H1 (cell line): ENCODE measurements at regions of chr12 and their contacts with region 1.

Region 1: GRCh38 chr12:26845057-26845666 is 12.2 kb upstream of the ITPR2 start:
- DNase-seq: peak in 1 of 2 experiments; percentile 76
- H3K4me3 ChIP-seq: no peak overlapping the region
- H3K27ac ChIP-seq: no peak overlapping the region
- H3K4me1 ChIP-seq: no peaks in the 10 kb centered on the region
- H3K27me3 ChIP-seq: no peaks in the 10 kb centered on the region
- CTCF ChIP-seq: peak; percentile 48 to 66 (median 58)
- EP300 ChIP-seq: no peak
- POLR2A ChIP-seq: no peak
- RAD21 ChIP-seq: peak; percentile 37 to 60

Region 2: DNA sequence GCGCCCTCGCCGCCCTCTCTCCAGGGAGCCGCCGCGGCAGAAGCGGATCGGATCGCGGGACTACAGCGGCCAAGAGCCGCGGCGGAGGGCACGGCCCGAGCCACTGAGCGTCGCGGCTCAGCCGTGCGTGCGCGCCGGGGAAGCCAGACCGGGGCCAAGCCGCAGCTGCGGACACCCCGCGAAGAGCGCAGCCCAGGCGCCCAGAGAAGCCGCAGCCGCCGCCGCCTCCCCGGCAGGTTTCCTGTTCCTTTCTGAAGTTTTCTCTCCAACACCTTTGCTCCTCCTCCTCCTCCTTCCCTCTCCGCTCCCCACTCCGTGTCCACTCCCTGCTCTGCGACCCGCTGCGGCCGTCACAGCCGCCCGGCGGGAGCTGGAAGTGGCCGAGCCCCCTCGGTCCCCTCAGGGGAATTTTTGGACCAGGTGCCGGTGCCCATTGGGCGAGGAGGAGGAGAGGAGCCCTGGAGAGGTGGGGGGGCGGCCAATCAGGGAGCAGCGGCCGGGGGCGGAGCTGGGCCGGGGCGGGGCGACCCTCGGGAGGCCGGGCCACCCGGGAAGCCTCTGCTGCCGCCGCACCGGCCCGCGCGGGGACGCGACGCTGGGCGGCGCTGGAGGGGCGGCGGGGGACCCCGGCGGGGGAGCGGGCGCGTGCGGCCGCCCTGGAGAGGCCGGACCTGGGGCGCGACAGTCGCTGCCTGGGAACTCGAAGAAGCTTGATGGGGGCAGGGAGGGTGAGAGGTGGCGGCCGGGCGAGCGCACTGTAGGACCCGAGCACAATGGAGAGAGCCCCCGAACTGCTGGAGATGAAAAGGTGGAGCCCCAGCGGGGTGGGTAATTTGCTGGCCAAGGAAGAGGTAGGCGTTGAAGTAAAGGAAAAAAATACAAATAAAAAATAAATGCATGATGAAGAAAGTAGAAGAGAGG is 12.1 kb before region 1 on chr12 and contains the start of gene ITPR2:
- CTCF ChIA-PET with region 1: interaction called, 27 read pairs
- POLR2A ChIA-PET with region 1: interaction called, 3 read pairs
- DNase-seq: peak; percentile 73 to 94
- H3K4me3 ChIP-seq: peak within 1 kb of the TSS; percentile 75 to 84 (median 78)
- H3K27ac ChIP-seq: no peak within 1 kb of the TSS
- H3K4me1 ChIP-seq: peaks cover 0 to 4% (median 2%) of the 10 kb centered on the region in 4 experiments; a peak in 4 of 7 replicates
- H3K27me3 ChIP-seq: peaks cover 0 to 6% (median 1%) of the 10 kb centered on the region in 4 experiments; a peak in 1 of 7 replicates
- CTCF ChIP-seq: peak in 2 of 3 experiments; percentile 6 to 40; a peak in 1 of 4 replicates
- EP300 ChIP-seq: no peak
- POLR2A ChIP-seq: peak in 1 of 2 experiments; percentile 53; a peak in 1 of 3 replicates
- RAD21 ChIP-seq: peak in 1 of 2 experiments; percentile 7; a peak in 1 of 4 replicates
- total RNA-seq, gene ITPR2: 48.3 and 48.4 TPM in 2 replicates

Region 3: GRCh38 chr12:26863502-26863901 is 18.3 kb after region 1 on chr12:
- CTCF ChIA-PET with region 1: interaction called, 10 read pairs
- POLR2A ChIA-PET with region 1: no interaction called
- DNase-seq: no peak
- H3K4me3 ChIP-seq: no peak overlapping the region
- H3K27ac ChIP-seq: no peak overlapping the region
- H3K4me1 ChIP-seq: no peaks in the 10 kb centered on the region
- H3K27me3 ChIP-seq: no peaks in the 10 kb centered on the region
- CTCF ChIP-seq: peak in 2 of 3 experiments; percentile 29 to 56; a peak in 2 of 4 replicates
- EP300 ChIP-seq: no peak
- POLR2A ChIP-seq: no peak
- RAD21 ChIP-seq: no peak

Region 4: DNA sequence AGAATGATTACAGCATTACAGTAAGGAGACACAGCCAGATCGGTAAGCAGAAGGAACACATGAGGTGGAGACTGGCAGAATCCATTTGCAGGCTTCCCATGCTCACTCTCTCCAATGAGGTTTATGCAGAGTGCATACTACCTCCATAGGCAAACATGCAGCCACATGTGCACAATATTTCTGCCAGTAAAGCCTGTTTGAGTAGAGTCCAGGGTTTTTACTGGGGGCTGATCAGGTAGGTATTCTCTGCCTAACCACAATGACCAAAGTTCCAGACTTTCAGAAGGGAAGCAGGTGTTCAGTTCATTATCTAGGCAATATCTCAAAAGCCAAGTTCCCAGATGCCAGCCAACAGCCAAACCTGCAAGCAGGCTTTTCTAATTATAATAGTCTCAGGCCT is 61.5 kb after region 1 on chr12:
- CTCF ChIA-PET with region 1: no interaction called
- POLR2A ChIA-PET with region 1: no interaction called
- DNase-seq: no peak
- H3K4me3 ChIP-seq: no peak overlapping the region
- H3K27ac ChIP-seq: no peak overlapping the region
- H3K4me1 ChIP-seq: no peaks in the 10 kb centered on the region
- H3K27me3 ChIP-seq: no peaks in the 10 kb centered on the region
- CTCF ChIP-seq: no peak
- EP300 ChIP-seq: no peak
- POLR2A ChIP-seq: no peak
- RAD21 ChIP-seq: no peak